AG04449 (cell line): ENCODE measurements at regions of chr3 and their contacts with region 1.

Region 1: DNA sequence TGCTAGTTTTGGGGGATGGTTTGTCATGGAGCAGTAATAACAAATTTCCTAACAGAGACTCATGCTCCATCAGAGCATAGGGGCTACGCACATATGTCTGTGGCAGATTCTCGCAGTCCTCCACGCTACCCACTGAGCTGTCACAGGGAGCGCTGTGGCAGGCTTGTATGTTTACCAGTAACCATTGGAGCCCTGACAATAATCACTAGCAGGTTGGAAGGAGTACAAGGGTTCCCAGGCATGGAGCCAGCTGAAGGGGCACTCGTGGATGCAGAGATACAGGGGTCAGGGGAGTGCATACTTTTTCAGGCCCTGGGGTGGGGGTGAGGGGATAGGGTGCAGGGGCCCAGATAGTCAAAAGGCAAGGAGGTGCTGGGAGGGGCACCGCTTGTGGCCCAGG is 7.9 kb upstream of the GP9 start:
- DNase-seq: no peak
- H3K4me3 ChIP-seq: no peak overlapping the region
- CTCF ChIP-seq: no peak

Region 2: GRCh38 chr3:128784232-128784631 is 268.4 kb before region 1 on chr3:
- CTCF ChIA-PET with region 1: no interaction called
- POLR2A ChIA-PET with region 1: no interaction called
- DNase-seq: no peak
- H3K4me3 ChIP-seq: no peak overlapping the region
- CTCF ChIP-seq: peak; percentile 38

Region 3: GRCh38 chr3:129016356-129016719 is 36.3 kb before region 1 on chr3:
- CTCF ChIA-PET with region 1: interaction called, 38 read pairs
- POLR2A ChIA-PET with region 1: no interaction called
- DNase-seq: no peak
- H3K4me3 ChIP-seq: no peak overlapping the region
- CTCF ChIP-seq: no peak

Region 4: GRCh38 chr3:129039271-129040038 is 13.2 kb before region 1 on chr3:
- CTCF ChIA-PET with region 1: interaction called, 50 read pairs
- POLR2A ChIA-PET with region 1: no interaction called
- DNase-seq: no peak
- H3K4me3 ChIP-seq: no peak overlapping the region
- CTCF ChIP-seq: no peak

Region 5: GRCh38 chr3:129101370-129102138 is 48.9 kb after region 1 on chr3:
- CTCF ChIA-PET with region 1: interaction called, 10 read pairs
- POLR2A ChIA-PET with region 1: no interaction called
- DNase-seq: no peak
- H3K4me3 ChIP-seq: no peak overlapping the region
- CTCF ChIP-seq: no peak

Region 6: DNA sequence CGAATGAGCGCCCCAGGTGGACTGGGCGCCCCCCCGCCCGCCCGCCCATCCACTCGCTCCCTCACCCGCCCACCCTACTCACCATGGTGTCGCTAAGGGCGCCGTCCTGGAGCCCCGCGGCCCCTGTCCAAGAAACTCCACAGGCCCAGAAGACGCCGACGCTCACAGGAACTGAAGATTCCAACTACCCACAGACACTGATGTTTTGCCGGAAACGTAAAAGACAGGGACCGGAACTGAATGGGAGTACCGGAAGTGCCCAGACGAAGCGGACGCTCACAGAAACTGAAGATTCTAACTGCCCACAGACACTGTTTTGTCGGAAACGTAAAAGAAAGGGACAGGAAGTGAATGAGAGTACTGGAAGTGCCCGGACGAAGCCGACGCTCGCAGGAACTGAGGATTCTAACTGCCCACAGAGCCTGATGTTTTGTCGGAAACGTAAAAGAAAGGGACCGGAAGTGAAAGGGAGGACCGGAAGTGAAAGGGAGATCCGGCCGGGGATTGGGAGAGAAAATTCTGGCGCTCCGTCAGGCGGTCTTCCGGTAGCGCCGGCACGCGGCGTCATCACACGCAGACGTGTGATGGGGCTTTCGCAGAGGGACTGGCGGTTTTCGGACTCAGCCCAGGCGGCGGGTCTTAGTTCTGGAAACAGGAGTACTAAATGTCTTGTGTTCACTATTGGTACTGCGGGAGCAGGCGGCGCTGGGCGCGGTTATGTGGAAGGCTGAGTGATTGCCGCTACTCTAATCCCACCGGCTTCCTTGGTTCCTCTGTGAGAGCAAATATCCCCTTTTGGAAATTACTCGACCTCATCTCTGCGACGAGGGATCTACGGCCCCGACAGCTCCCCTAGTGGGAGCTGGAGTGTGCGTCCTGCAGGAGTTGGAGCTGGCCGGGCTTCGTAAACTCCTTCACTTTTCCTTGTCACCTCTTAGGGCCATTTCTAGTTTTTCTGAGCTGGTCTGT is 108.5 kb after region 1 on chr3 and contains the start of gene ISY1:
- CTCF ChIA-PET with region 1: interaction called, 26 read pairs
- POLR2A ChIA-PET with region 1: no interaction called
- DNase-seq: peak; percentile 63
- H3K4me3 ChIP-seq: peak within 1 kb of the TSS; percentile 80
- CTCF ChIP-seq: peak; percentile 89

Region 7: DNA sequence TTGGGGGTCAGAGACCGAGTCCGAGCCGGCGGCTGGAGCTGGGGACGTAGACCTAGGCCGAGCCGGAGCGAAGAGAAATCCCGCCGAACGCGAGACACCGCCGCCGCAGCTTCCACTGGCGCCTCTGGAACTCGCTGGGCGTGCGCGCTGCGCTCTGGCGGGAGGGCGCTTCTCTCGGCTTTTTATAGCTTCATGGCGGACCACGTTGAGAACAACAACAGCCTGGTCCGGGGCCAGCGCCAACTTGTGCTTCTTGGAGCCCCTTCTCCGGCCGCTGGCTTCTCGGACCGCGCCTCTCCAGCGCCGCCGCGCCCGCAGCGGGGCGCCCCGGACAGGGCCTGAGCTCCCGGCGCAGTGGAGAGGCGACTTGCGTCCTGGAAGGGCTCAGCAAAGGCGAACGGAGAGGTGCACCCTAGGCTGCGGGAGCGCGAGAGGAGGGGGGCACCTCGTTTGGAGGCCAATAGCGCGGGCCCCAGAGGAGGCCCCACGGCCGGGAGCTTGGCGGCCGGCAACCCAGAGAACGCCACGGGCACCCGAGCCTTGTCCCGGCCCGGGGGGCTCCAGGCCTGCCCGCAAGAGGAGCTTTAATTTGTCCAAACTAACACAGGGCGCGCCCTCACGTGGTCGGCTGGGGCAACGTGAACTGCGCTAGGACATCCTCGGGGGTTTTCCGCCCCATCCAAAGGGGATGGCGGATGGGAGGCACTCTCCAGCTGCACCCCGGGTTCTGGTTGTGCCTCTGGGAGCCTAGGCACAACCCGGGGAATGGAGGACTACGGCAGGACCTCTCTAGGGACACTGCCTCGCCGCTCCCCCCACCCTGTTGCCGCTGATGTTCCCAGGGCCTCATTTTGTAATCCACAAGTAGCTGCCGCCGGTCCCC is 263.7 kb after region 1 on chr3:
- CTCF ChIA-PET with region 1: interaction called, 14 read pairs
- POLR2A ChIA-PET with region 1: no interaction called
- DNase-seq: no peak
- H3K4me3 ChIP-seq: peak overlapping the region; percentile 86
- CTCF ChIP-seq: peak; percentile 70